ENCODE measurements at regions of chrX and their contacts with region 1.

Region 1: DNA sequence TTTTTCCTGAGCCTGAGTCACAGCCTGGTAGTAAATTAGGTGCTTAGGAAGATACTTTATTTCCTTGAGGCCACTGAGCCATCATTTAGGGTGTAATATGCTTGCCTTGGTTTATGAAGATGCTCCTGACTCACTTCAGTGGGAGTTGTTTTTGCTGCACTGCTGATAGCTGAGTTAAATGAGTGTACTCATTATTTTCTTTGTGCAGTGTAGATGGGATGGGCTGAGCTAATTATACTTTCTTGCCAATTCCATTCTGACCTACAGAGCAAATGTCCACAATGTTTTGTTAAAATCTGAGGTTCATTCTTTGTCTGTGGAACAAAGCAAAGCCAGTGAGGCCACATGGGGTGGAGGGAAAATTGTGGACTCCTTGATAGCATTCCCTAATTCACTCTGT is 60.0 kb downstream of the FGF13 start:
- DNase-seq: no peak
- H3K4me3 ChIP-seq: no peak overlapping the region
- H3K27ac ChIP-seq: no peak overlapping the region
- H3K4me1 ChIP-seq: no peaks in the 10 kb centered on the region
- H3K27me3 ChIP-seq: peaks cover 0 to 7% of the 10 kb centered on the region in 2 donors
- CTCF ChIP-seq: no peak
- POLR2A ChIP-seq: no peak

Region 2: GRCh38 chrX:138378876-138379275 is 272.6 kb before region 1 on chrX:
- intact Hi-C with region 1: loop called (anchors 5 kb)
- DNase-seq: no peak
- H3K4me3 ChIP-seq: no peak overlapping the region
- H3K27ac ChIP-seq: no peak overlapping the region
- H3K4me1 ChIP-seq: no peaks in the 10 kb centered on the region
- H3K27me3 ChIP-seq: peaks cover 0 to 16% of the 10 kb centered on the region in 2 donors
- CTCF ChIP-seq: no peak
- POLR2A ChIP-seq: no peak

Region 3: GRCh38 chrX:138683600-138683999 is 32.1 kb after region 1 on chrX:
- intact Hi-C with region 1: no loop called
- DNase-seq: no peak
- H3K4me3 ChIP-seq: no peak overlapping the region
- H3K27ac ChIP-seq: no peak overlapping the region
- H3K4me1 ChIP-seq: no peaks in the 10 kb centered on the region
- H3K27me3 ChIP-seq: peaks cover 0 to 11% of the 10 kb centered on the region in 2 donors
- CTCF ChIP-seq: no peak
- POLR2A ChIP-seq: no peak

Region 4: GRCh38 chrX:138711399-138712347 is 60.2 kb after region 1 on chrX and contains the start of gene FGF13:
- intact Hi-C with region 1: loop called (anchors 2 kb)
- DNase-seq: peak in 1 of 2 donors; percentile 26
- H3K4me3 ChIP-seq: peak within 1 kb of the TSS; percentile 40 to 72 (median 55)
- H3K27ac ChIP-seq: peak within 1 kb of the TSS; percentile 17 to 68
- H3K4me1 ChIP-seq: no peaks in the 10 kb centered on the region
- H3K27me3 ChIP-seq: peaks cover 0 to 53% of the 10 kb centered on the region in 2 donors
- CTCF ChIP-seq: peak in 1 of 3 donors; percentile 35
- POLR2A ChIP-seq: no peak
- total RNA-seq, gene FGF13: 7.9 to 18.1 (median 13.1) TPM

Measured in breast epithelium (tissue), 4 donors.